ENCODE measurements at regions of chr18 and their contacts with region 1.

Region 1: GRCh38 chr18:23049698-23050373 is 85.4 kb upstream of the CABLES1 start:
- DNase-seq: no peak
- ATAC-seq: peak; percentile 68
- H3K4me3 Mint-ChIP-seq: no peak overlapping the region
- H3K27ac Mint-ChIP-seq: no peak overlapping the region
- H3K4me1 Mint-ChIP-seq: peaks cover 15% of the 10 kb centered on the region
- H3K27me3 Mint-ChIP-seq: no peaks in the 10 kb centered on the region

Region 2: GRCh38 chr18:23106580-23106979 is 56.7 kb after region 1 on chr18:
- CTCF ChIA-PET with region 1: no interaction called
- POLR2A ChIA-PET with region 1: no interaction called
- intact Hi-C with region 1: loop called in 1 of 2 experiments (anchors 10 kb)
- DNase-seq: no peak
- ATAC-seq: no peak
- H3K4me3 Mint-ChIP-seq: no peak overlapping the region
- H3K27ac Mint-ChIP-seq: no peak overlapping the region
- H3K4me1 Mint-ChIP-seq: peaks cover 3% of the 10 kb centered on the region
- H3K27me3 Mint-ChIP-seq: no peaks in the 10 kb centered on the region

Region 3: DNA sequence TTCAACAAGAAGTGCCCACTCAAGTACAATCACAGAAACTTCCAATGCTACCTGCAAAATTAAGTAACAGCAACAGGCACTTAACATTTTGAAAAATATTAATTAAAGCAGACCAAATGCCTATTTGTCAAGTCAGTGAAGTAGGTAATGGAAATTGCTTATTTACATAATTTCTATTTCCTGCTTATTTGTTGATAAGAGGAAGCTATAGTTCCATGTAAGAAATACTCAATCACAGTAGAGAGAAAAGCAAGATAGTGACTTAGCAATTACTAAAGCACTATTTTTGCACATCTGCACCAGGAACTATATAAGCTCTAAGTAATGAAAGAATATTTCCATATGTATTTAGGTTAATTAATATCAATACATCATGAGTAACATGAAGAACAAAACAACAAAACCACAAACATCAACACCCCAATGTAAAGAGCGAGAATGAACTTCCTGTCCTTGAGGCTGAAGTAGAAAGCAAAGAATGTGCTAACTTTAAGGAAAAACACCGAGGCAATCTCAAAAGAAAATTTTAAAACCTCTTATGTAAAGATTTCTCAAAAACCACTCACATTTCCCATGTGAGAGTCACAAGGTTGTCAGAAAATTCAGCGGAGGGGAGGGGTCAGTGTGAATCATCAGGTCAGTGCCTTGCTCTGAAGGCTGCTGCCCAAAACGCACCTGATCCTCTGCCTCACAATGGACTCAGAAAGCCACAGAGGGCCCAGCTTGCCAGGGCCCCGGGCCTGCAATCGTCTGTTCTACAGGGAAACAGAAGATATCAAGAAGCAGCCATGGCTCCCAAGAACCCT is 524.0 kb after region 1 on chr18:
- CTCF ChIA-PET with region 1: no interaction called
- POLR2A ChIA-PET with region 1: no interaction called
- intact Hi-C with region 1: no loop called
- DNase-seq: peak; percentile 61
- ATAC-seq: peak; percentile 87
- H3K4me3 Mint-ChIP-seq: peak overlapping the region; percentile 3
- H3K27ac Mint-ChIP-seq: peak overlapping the region; percentile 59
- H3K4me1 Mint-ChIP-seq: peaks cover 31% of the 10 kb centered on the region
- H3K27me3 Mint-ChIP-seq: no peaks in the 10 kb centered on the region

Region 4: DNA sequence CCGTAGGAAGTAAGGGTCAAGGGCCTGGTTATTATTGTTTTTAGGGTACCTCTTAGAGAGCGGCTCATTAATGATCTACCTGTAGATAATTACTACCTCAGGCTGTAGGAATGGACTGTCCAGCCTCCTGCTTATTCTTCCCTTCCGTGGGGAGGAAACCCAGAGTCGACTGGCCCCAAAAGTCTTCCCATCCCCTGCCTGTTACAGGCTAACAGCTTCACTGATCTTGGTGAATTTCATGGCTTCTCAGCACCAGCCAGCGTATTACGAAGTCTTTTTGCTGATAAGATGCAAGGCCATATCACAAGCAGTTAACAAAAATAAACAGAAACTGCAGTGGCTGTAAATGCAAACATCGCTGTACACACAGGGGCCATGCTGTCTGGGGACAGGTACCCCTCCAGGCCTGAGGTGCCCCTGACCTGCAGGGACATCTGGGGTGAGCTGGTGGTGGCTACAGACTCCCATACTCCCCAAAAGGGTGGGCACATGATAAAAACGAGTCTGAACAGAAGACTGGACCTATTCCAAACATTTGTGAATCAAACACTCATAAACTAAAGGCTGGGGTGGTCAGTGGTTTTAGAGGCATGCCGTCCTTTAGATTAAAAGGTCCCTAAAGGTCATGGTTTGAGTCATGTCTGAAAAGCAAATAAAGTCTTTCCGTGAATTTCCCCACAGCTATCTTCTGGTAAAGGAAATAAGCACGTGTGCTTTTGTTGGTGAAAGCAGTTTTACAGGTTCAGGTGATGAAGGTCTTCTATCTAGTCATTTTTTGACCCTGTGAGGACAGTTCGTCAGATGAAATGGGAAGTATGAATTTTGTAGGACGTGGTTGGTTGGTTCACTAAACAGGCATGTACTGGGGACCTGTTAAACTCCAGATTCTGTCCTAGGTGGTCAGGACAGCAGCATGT is 1001.5 kb after region 1 on chr18:
- CTCF ChIA-PET with region 1: no interaction called
- POLR2A ChIA-PET with region 1: no interaction called
- intact Hi-C with region 1: no loop called
- DNase-seq: no peak
- ATAC-seq: peak; percentile 24
- H3K4me3 Mint-ChIP-seq: no peak overlapping the region
- H3K27ac Mint-ChIP-seq: peak overlapping the region; percentile 79
- H3K4me1 Mint-ChIP-seq: peaks cover 73% of the 10 kb centered on the region
- H3K27me3 Mint-ChIP-seq: no peaks in the 10 kb centered on the region

Measured in activated CD4-positive, alpha-beta T cell treated with anti-CD3 and anti-CD28 coated beads for 36 hours (primary cell).